Gastrocnemius medialis (tissue), 4 donors: ENCODE measurements at regions of chr14 and their contacts with region 1.

Region 1: GRCh38 chr14:56339855-56340701 is 221.9 kb downstream of the PELI2 start:
- DNase-seq: peak; percentile 45 to 57
- ATAC-seq: peak; percentile 90 to 92
- H3K4me3 ChIP-seq: no peak overlapping the region
- H3K27ac ChIP-seq: peak overlapping the region in 1 of 4 donors; percentile 10
- H3K4me1 ChIP-seq: peaks cover 17 to 24% of the 10 kb centered on the region in 2 donors
- H3K27me3 ChIP-seq: no peaks in the 10 kb centered on the region
- CTCF ChIP-seq: peak; percentile 55 to 78 (median 61)
- POLR2A ChIP-seq: no peak

Region 2: GRCh38 chr14:55446218-55446654 is 893.8 kb before region 1 on chr14:
- in situ Hi-C with region 1: no loop called
- intact Hi-C with region 1: loop called (anchors 10 kb)
- DNase-seq: peak in 1 of 2 donors; percentile 14
- ATAC-seq: no peak
- H3K4me3 ChIP-seq: no peak overlapping the region
- H3K27ac ChIP-seq: no peak overlapping the region
- H3K4me1 ChIP-seq: peaks cover 0 to 5% of the 10 kb centered on the region in 2 donors
- H3K27me3 ChIP-seq: no peaks in the 10 kb centered on the region
- CTCF ChIP-seq: peak; percentile 13 to 70 (median 42)
- POLR2A ChIP-seq: no peak

Region 3: DNA sequence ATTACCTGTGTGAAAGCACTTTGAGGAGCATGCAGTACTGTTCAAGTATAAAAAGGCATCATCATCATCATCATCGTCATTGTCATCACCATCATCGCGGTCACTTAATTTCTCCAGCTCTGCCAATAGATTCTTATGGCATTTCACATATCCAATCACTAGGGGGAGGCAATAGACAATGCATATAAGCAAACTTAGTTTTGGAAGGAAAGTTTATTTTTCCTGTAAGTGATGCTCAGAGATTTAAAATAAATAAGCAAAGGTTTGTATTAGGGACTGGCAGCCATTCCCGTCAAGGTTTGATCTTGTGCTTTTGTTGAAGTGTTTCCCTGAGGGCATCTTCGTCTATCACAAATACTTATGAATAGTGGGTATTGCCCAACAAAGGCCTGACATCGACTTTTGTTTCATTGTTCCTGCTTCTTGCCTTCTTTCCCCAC is 632.7 kb before region 1 on chr14:
- in situ Hi-C with region 1: loop called (anchors 10 to 25 kb)
- intact Hi-C with region 1: loop called (anchors 1 kb)
- DNase-seq: no peak
- ATAC-seq: peak; percentile 28 to 34
- H3K4me3 ChIP-seq: no peak overlapping the region
- H3K27ac ChIP-seq: no peak overlapping the region
- H3K4me1 ChIP-seq: peaks cover under 1 to 3% of the 10 kb centered on the region in 2 donors
- H3K27me3 ChIP-seq: no peaks in the 10 kb centered on the region
- CTCF ChIP-seq: peak; percentile 40 to 55 (median 53)
- POLR2A ChIP-seq: no peak

Region 4: GRCh38 chr14:55731881-55732498 is 608.1 kb before region 1 on chr14:
- in situ Hi-C with region 1: loop called in 1 of 4 experiments (anchors 10 kb)
- intact Hi-C with region 1: no loop called
- DNase-seq: no peak
- ATAC-seq: no peak
- H3K4me3 ChIP-seq: no peak overlapping the region
- H3K27ac ChIP-seq: no peak overlapping the region
- H3K4me1 ChIP-seq: no peaks in the 10 kb centered on the region
- H3K27me3 ChIP-seq: no peaks in the 10 kb centered on the region
- CTCF ChIP-seq: peak in 3 of 5 experiments; percentile 9 to 42 (median 33)
- POLR2A ChIP-seq: no peak

Region 5: GRCh38 chr14:56117765-56118610 is 222.1 kb before region 1 on chr14 and contains the start of gene PELI2:
- in situ Hi-C with region 1: no loop called
- intact Hi-C with region 1: loop called (anchors 2 kb)
- DNase-seq: peak; percentile 32 to 62
- ATAC-seq: peak; percentile 76 to 83
- H3K4me3 ChIP-seq: peak within 1 kb of the TSS; percentile 71 to 86 (median 78)
- H3K27ac ChIP-seq: peak within 1 kb of the TSS; percentile 75 to 87 (median 82)
- H3K4me1 ChIP-seq: peaks cover 8 to 11% of the 10 kb centered on the region in 2 donors
- H3K27me3 ChIP-seq: no peaks in the 10 kb centered on the region
- CTCF ChIP-seq: peak in 1 of 5 experiments; percentile 20
- POLR2A ChIP-seq: peak; percentile 54 to 76
- total RNA-seq, gene PELI2: 2.5 to 5.8 (median 4.2) TPM